ENCODE measurements at regions of chr11 and their contacts with region 1.

Region 1: GRCh38 chr11:104694259-104695064 is 203.8 kb downstream of the CASP12 start:
- DNase-seq: no peak
- H3K4me3 Mint-ChIP-seq: no peak overlapping the region
- H3K27ac Mint-ChIP-seq: no peak overlapping the region
- H3K4me1 Mint-ChIP-seq: peaks cover 4% of the 10 kb centered on the region
- H3K27me3 Mint-ChIP-seq: no peaks in the 10 kb centered on the region

Region 2: GRCh38 chr11:104531075-104531474 is 163.4 kb before region 1 on chr11:
- intact Hi-C with region 1: no loop called
- DNase-seq: no peak
- H3K4me3 Mint-ChIP-seq: no peak overlapping the region
- H3K27ac Mint-ChIP-seq: no peak overlapping the region
- H3K4me1 Mint-ChIP-seq: no peaks in the 10 kb centered on the region
- H3K27me3 Mint-ChIP-seq: peaks cover 2% of the 10 kb centered on the region

Region 3: DNA sequence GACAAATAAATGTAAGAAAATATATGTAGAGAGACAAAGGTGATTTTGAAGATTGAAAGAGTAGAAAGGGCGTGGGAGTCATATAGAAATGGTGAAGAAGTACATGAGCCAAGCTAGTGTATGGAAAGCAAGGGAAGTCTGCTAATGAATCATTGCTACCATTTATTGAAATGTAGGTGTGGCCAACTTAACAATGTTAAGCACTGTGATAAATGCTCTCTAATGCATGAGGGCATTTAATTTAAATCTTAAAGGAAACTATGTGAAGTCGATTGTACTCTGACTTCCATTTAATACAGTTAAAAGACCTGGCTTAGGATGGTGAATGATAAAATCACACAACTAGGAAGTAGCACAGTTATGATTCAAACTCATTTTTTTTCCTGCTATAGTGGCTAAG is 16.1 kb before region 1 on chr11:
- intact Hi-C with region 1: no loop called
- DNase-seq: no peak
- H3K4me3 Mint-ChIP-seq: no peak overlapping the region
- H3K27ac Mint-ChIP-seq: no peak overlapping the region
- H3K4me1 Mint-ChIP-seq: no peaks in the 10 kb centered on the region
- H3K27me3 Mint-ChIP-seq: no peaks in the 10 kb centered on the region

Region 4: GRCh38 chr11:104731890-104732289 is 37.4 kb after region 1 on chr11:
- intact Hi-C with region 1: loop called (anchors 5 kb)
- DNase-seq: peak; percentile 3
- H3K4me3 Mint-ChIP-seq: no peak overlapping the region
- H3K27ac Mint-ChIP-seq: peak overlapping the region; percentile 50
- H3K4me1 Mint-ChIP-seq: peaks cover 25% of the 10 kb centered on the region
- H3K27me3 Mint-ChIP-seq: no peaks in the 10 kb centered on the region